GM10248 (cell line): ENCODE measurements at regions of chr3 and their contacts with region 1.

Region 1: DNA sequence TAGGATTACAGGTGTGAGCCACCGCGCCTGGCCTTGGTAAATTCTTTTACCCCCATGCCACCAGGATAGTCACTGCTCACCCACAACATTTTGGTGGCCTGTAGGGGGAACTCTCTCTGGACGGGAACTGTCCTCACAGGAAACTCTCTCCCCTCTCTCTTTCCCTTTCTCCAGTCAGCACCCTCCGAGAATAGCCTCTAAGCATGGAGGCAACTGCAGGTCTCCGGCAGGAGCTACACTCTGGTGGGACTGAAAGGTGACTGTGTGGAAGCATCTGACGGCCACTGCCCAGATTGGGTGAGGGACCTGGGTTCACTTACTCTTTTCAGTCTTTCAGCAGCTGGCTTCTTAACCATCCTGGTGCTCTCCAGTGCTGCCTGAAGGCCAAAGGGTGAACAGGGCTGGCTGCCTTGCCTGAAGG is 21.3 kb downstream of the TRANK1 start:
- DNase-seq: no peak
- CTCF ChIP-seq: peak; percentile 40

Region 2: GRCh38 chr3:36911990-36912804 is 11.3 kb before region 1 on chr3:
- CTCF ChIA-PET with region 1: interaction called, 10 read pairs
- POLR2A ChIA-PET with region 1: no interaction called
- DNase-seq: peak; percentile 82
- CTCF ChIP-seq: no peak

Region 3: GRCh38 chr3:36933540-36934296 is 10.2 kb after region 1 on chr3:
- CTCF ChIA-PET with region 1: interaction called, 38 read pairs
- POLR2A ChIA-PET with region 1: no interaction called
- DNase-seq: no peak
- CTCF ChIP-seq: no peak

Region 4: GRCh38 chr3:36944012-36944640 is 20.6 kb after region 1 on chr3:
- CTCF ChIA-PET with region 1: interaction called, 12 read pairs
- POLR2A ChIA-PET with region 1: no interaction called
- DNase-seq: peak; percentile 53
- CTCF ChIP-seq: peak; percentile 6